ENCODE measurements at regions of chr11 and their contacts with region 1.

Region 1: DNA sequence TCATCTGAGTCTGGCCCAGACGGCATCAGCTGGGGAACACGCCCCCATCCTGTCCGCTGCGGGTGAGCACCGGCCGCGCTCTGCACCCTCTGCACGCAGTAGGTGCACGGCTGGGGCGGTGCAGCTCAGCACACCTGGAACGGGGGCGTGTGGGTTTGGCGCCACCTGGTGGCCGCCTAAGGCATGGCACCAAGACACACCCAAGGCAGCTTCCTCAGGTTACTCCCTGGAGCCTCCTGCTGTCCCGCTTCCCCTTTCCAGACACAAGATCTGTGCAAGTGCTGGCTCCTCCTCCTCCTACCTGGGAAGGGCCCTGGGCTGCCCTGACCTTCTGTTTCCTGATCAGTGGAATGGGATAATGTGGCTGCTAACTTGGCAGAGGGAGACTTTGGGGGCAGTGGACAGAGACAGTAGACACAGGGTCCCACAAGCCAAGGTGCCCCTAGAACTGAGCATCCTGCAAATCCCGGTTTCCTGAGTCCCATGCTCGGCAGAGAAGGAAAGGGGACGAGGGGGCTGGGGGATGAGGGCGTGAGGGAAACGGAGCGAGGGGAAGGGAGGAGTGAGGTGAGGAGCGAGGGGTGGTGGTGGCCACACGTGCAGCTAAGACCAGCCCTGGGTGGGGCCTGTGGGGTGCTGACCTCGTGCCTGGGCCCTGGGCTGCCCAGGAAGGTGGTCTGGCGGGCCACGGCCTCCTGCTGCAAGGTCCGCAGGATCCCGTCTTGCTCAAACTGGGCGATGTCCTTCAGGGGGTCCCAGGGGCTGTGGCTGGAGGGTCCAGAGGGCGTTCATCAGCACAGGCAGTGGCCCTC is 34.8 kb upstream of the CARS1 start:
- DNase-seq: peak; percentile 50 to 86 (median 67)
- ATAC-seq: peak; percentile 97
- H3K4me3 ChIP-seq: no peak overlapping the region
- H3K4me3 Mint-ChIP-seq: no peak overlapping the region
- H3K27ac ChIP-seq: no peak overlapping the region
- H3K27ac Mint-ChIP-seq: no peak overlapping the region
- H3K4me1 ChIP-seq: no peaks in the 10 kb centered on the region
- H3K4me1 Mint-ChIP-seq: no peaks in the 10 kb centered on the region
- H3K27me3 ChIP-seq: no peaks in the 10 kb centered on the region
- H3K27me3 Mint-ChIP-seq: no peaks in the 10 kb centered on the region
- CTCF ChIP-seq: peak; percentile 90

Region 2: DNA sequence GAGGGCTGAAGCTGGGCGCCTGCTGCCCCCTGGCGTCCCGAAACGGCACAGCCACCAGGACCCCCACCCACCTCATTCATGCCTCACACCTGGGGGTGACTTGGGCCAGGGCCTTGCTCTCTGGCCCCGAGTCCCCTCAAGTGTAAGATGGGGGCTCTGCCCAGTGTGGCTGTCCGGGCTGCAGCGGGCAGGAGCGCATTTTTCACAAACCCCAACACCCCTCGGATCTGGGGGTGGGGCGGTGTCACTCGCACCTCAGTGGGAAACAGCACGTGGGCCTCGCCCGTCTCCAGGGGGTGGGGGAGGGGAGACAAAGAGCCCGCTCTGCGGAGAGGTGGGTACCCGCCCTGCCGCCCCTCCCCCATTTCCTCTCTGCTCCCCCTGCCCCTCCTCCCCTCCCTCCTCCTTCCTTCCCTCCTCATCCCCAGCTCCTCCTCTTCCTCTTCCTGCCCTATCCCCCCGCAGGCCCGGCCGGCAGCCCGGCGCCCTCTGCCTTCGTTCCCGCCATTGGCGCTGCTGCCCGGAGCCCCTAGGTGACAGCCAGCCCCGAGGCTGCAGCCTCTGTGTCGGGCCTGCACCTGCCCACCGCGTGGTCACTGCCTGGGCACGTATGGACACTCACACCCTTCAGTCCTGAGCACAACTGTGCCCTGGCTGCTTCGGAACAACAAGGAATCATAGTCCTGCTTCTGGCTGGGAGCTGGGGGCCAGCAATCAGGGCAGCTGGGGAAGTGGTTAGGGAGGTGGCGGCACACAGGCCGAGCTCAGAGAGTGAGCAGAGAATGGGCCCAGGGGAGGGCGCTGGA is 199.6 kb before region 1 on chr11:
- CTCF ChIA-PET with region 1: interaction called, 17 read pairs
- POLR2A ChIA-PET with region 1: no interaction called
- intact Hi-C with region 1: loop called in 1 of 2 experiments (anchors 5 kb)
- DNase-seq: peak in 8 of 9 experiments; percentile 40 to 80 (median 60)
- ATAC-seq: peak; percentile 65
- H3K4me3 ChIP-seq: peak overlapping the region; percentile 48 to 51
- H3K4me3 Mint-ChIP-seq: peak overlapping the region; percentile 68
- H3K27ac ChIP-seq: peak overlapping the region; percentile 31 to 71
- H3K27ac Mint-ChIP-seq: peak overlapping the region; percentile 88
- H3K4me1 ChIP-seq: peaks cover 35% of the 10 kb centered on the region
- H3K4me1 Mint-ChIP-seq: peaks cover 25% of the 10 kb centered on the region
- H3K27me3 ChIP-seq: no peaks in the 10 kb centered on the region
- H3K27me3 Mint-ChIP-seq: no peaks in the 10 kb centered on the region
- CTCF ChIP-seq: peak; percentile 88

Region 3: GRCh38 chr11:2975594-2975993 is 116.4 kb before region 1 on chr11:
- CTCF ChIA-PET with region 1: interaction called, 25 read pairs
- POLR2A ChIA-PET with region 1: no interaction called
- intact Hi-C with region 1: loop called (anchors 1 kb)
- DNase-seq: peak in 8 of 9 experiments; percentile 21 to 79 (median 62)
- ATAC-seq: peak; percentile 96
- H3K4me3 ChIP-seq: no peak overlapping the region
- H3K4me3 Mint-ChIP-seq: no peak overlapping the region
- H3K27ac ChIP-seq: no peak overlapping the region
- H3K27ac Mint-ChIP-seq: peak overlapping the region; percentile 73
- H3K4me1 ChIP-seq: peaks cover 25% of the 10 kb centered on the region
- H3K4me1 Mint-ChIP-seq: peaks cover 65% of the 10 kb centered on the region
- H3K27me3 ChIP-seq: no peaks in the 10 kb centered on the region
- H3K27me3 Mint-ChIP-seq: no peaks in the 10 kb centered on the region
- CTCF ChIP-seq: peak; percentile 60

Region 4: DNA sequence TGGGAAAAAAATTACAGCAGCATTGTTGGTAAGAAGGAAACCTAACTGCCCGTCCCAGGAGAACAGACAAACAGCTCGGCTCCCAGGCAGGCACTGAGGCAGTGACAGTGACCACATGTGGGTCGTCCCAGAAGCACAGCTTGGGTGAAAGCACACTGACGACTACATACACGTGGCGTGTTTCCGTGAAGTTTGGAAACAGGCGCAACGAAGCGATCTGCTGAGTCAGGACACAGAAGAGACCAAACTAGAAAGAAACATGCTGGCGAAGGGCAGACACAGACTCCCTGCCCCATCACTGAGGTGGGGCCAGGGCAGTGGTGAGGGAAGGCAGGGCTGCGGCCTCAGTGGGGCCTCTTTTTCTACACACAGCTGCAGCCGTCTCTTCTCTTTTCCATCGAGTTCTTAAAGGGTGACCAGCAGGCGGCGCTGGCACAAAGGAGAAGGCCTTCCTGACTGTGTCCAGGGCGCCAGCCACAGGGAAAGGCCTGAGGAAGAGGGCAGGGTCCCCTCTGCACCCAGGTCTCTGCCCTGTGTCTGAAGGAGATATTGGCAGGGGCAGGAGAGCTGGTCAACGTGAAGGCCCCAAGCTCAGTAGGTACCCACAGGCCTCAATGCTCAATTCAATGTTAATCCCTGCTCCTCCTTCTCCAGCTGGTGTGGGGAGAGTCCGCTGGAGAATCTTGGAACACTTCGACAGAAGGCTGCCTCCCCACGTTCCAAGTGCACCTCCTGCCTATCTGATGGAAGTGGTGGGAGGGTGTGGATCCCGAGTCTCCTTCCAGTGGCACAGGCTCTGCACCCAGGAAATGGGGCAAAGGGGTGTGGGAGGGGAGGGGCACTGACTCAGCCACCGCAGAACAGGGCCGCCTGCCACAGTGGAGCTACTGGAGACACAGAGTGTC is 54.7 kb before region 1 on chr11:
- CTCF ChIA-PET with region 1: interaction called, 51 read pairs
- POLR2A ChIA-PET with region 1: no interaction called
- intact Hi-C with region 1: loop called (anchors 1 kb)
- DNase-seq: peak in 8 of 9 experiments; percentile 18 to 66 (median 48)
- ATAC-seq: peak; percentile 84
- H3K4me3 ChIP-seq: no peak overlapping the region
- H3K4me3 Mint-ChIP-seq: no peak overlapping the region
- H3K27ac ChIP-seq: no peak overlapping the region
- H3K27ac Mint-ChIP-seq: no peak overlapping the region
- H3K4me1 ChIP-seq: peaks cover 6% of the 10 kb centered on the region
- H3K4me1 Mint-ChIP-seq: peaks cover 12% of the 10 kb centered on the region
- H3K27me3 ChIP-seq: no peaks in the 10 kb centered on the region
- H3K27me3 Mint-ChIP-seq: no peaks in the 10 kb centered on the region
- CTCF ChIP-seq: peak; percentile 30

Region 5: GRCh38 chr11:3057069-3057963 is 34.7 kb before region 1 on chr11 and contains the start of gene CARS1:
- CTCF ChIA-PET with region 1: interaction called, 3 read pairs
- POLR2A ChIA-PET with region 1: no interaction called
- intact Hi-C with region 1: loop called in 1 of 2 experiments (anchors 5 kb)
- DNase-seq: peak; percentile 79 to 96 (median 92)
- ATAC-seq: peak; percentile 97
- H3K4me3 ChIP-seq: peak within 1 kb of the TSS; percentile 88 to 93
- H3K4me3 Mint-ChIP-seq: peak within 1 kb of the TSS; percentile 87
- H3K27ac ChIP-seq: peak within 1 kb of the TSS; percentile 73 to 76
- H3K27ac Mint-ChIP-seq: peak within 1 kb of the TSS; percentile 79
- H3K4me1 ChIP-seq: peaks cover 17% of the 10 kb centered on the region
- H3K4me1 Mint-ChIP-seq: peaks cover 38% of the 10 kb centered on the region
- H3K27me3 ChIP-seq: no peaks in the 10 kb centered on the region
- H3K27me3 Mint-ChIP-seq: no peaks in the 10 kb centered on the region
- CTCF ChIP-seq: no peak
- total RNA-seq, gene CARS1: 34.2 to 34.7 TPM

Region 6: GRCh38 chr11:3123305-3123704 is 31.3 kb after region 1 on chr11:
- CTCF ChIA-PET with region 1: no interaction called
- POLR2A ChIA-PET with region 1: no interaction called
- intact Hi-C with region 1: no loop called
- DNase-seq: no peak
- ATAC-seq: no peak
- H3K4me3 ChIP-seq: no peak overlapping the region
- H3K4me3 Mint-ChIP-seq: no peak overlapping the region
- H3K27ac ChIP-seq: no peak overlapping the region
- H3K27ac Mint-ChIP-seq: no peak overlapping the region
- H3K4me1 ChIP-seq: no peaks in the 10 kb centered on the region
- H3K4me1 Mint-ChIP-seq: no peaks in the 10 kb centered on the region
- H3K27me3 ChIP-seq: no peaks in the 10 kb centered on the region
- H3K27me3 Mint-ChIP-seq: no peaks in the 10 kb centered on the region
- CTCF ChIP-seq: no peak

Region 7: DNA sequence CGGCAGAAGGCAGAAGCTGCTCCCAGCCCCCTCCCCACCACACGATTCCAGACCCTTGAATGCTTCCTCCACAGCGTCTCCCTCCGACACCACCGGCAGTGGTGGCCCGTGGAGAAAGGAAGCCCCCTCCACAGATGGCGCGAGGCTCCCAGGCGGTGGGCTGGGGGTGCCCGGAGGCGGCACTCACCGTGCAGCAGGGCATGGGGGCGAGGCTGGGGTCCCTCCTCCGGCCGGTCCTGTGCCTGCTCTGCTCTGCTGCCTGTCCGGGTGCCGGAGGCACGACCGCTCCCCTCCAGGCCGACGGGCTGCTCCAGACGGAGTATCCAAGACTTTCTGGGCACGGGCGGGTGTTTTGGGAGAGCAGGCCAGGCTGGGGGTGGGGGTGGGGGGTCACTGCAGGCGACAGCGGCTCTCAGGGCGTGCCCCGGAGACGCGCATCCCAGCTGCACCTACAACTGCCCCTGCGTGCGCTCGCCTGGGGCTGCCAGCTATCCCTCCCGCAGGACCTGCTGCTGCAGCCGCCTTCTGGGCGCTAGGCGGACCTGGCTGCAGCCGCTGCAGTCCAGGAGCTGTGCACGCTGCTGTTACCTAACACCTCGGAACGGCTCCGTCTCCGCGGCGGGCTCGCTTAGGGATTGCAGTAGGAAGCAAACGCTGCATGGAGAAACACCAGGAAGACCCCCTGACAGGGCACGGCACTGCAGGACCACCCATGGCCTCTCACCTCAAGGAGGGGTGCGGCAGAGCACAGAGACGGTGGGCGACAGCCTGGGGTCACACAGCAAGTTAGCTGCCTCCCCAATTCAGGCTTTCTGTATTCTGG is 111.4 kb after region 1 on chr11:
- CTCF ChIA-PET with region 1: no interaction called
- POLR2A ChIA-PET with region 1: no interaction called
- intact Hi-C with region 1: no loop called
- DNase-seq: no peak
- ATAC-seq: no peak
- H3K4me3 ChIP-seq: no peak overlapping the region
- H3K4me3 Mint-ChIP-seq: no peak overlapping the region
- H3K27ac ChIP-seq: no peak overlapping the region
- H3K27ac Mint-ChIP-seq: no peak overlapping the region
- H3K4me1 ChIP-seq: peaks cover 29% of the 10 kb centered on the region
- H3K4me1 Mint-ChIP-seq: peaks cover 3% of the 10 kb centered on the region
- H3K27me3 ChIP-seq: peaks cover 0 to 17% of the 10 kb centered on the region in 2 experiments
- H3K27me3 Mint-ChIP-seq: peaks cover 12% of the 10 kb centered on the region
- CTCF ChIP-seq: no peak

Region 8: DNA sequence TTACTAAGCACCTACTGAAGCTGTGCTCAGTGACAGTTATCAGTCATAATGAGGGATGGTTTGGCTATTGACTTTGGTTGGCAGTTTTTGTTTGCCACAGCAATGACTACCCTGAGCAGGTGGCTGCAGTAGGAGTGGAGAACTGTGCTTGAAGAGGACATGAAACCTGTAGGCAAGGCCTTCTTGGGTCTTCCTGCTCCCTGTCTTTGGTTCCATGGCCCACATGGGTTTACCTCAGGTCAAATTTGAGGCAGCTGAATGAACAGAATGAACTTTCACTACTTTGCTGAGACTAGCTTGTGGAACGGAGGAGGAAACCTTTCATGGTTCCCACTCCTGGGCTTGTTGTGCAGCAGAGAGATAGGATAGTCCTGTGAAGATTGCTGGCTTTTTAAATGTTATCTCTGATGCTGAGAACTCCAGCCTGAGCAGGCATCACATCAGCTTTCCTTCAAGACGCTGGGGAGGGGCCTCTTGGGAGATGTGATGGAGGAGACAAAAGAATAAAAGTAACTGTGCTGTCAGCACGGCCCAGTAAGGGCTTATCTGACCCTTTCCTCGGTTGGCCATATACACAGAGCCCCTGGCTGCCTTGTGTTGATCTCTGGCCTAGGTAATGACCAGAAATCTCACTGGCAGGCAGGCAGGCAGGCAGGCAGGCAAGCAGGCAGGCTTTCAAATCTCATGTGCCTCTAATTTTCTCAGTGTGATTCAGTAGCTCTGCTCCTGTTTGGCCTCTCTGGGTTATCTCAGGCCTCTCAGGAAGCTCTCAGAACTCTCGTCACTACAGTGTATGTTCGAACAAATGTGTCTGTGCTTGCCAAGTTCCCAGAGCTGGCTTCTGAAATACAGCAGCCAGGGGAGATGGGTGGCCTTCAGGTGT is 775.5 kb after region 1 on chr11:
- CTCF ChIA-PET with region 1: no interaction called
- POLR2A ChIA-PET with region 1: no interaction called
- intact Hi-C with region 1: no loop called
- DNase-seq: peak in 1 of 9 experiments; percentile 39
- ATAC-seq: peak; percentile 46
- H3K4me3 ChIP-seq: no peak overlapping the region
- H3K4me3 Mint-ChIP-seq: peak overlapping the region; percentile 71
- H3K27ac ChIP-seq: peak overlapping the region in 1 of 2 experiments; percentile 66
- H3K27ac Mint-ChIP-seq: peak overlapping the region; percentile 80
- H3K4me1 ChIP-seq: peaks cover 90% of the 10 kb centered on the region
- H3K4me1 Mint-ChIP-seq: peaks cover 86% of the 10 kb centered on the region
- H3K27me3 ChIP-seq: no peaks in the 10 kb centered on the region
- H3K27me3 Mint-ChIP-seq: no peaks in the 10 kb centered on the region
- CTCF ChIP-seq: no peak

Region 9: GRCh38 chr11:4577761-4578160 is 1485.8 kb after region 1 on chr11:
- CTCF ChIA-PET with region 1: no interaction called
- POLR2A ChIA-PET with region 1: no interaction called
- intact Hi-C with region 1: no loop called
- DNase-seq: no peak
- ATAC-seq: no peak
- H3K4me3 ChIP-seq: no peak overlapping the region
- H3K4me3 Mint-ChIP-seq: no peak overlapping the region
- H3K27ac ChIP-seq: no peak overlapping the region
- H3K27ac Mint-ChIP-seq: no peak overlapping the region
- H3K4me1 ChIP-seq: no peaks in the 10 kb centered on the region
- H3K4me1 Mint-ChIP-seq: peaks cover 4% of the 10 kb centered on the region
- H3K27me3 ChIP-seq: no peaks in the 10 kb centered on the region
- H3K27me3 Mint-ChIP-seq: peaks cover 37% of the 10 kb centered on the region
- CTCF ChIP-seq: no peak